ENCODE measurements at regions of chr12 and their contacts with region 1.

Region 1: GRCh38 chr12:2877047-2877952 is at the starts of genes FOXM1 and RHNO1:
- DNase-seq: peak; percentile 93
- H3K4me3 ChIP-seq: peak within 1 kb of the TSS; percentile 65
- H3K27ac ChIP-seq: peak within 1 kb of the TSS; percentile 86
- H3K4me1 ChIP-seq: no peaks in the 10 kb centered on the region
- H3K27me3 ChIP-seq: no peaks in the 10 kb centered on the region
- CTCF ChIP-seq: no peak
- total RNA-seq, gene FOXM1: 198 and 200 TPM in 2 replicates
- total RNA-seq, gene RHNO1: 71.7 and 79.9 TPM in 2 replicates

Region 2: GRCh38 chr12:2890388-2891239 is 13.3 kb after region 1 on chr12 and contains the start of gene TULP3:
- CTCF ChIA-PET with region 1: interaction called, 3 read pairs
- POLR2A ChIA-PET with region 1: interaction called, 8 read pairs
- intact Hi-C with region 1: loop called (anchors 1 kb)
- DNase-seq: peak; percentile 99
- H3K4me3 ChIP-seq: peak within 1 kb of the TSS; percentile 81
- H3K27ac ChIP-seq: peak within 1 kb of the TSS; percentile 89
- H3K4me1 ChIP-seq: peaks cover 14% of the 10 kb centered on the region
- H3K27me3 ChIP-seq: no peaks in the 10 kb centered on the region
- CTCF ChIP-seq: 0 out of 2 replicates have a peak, but pooled peaks have one; percentile 5
- total RNA-seq, gene TULP3: 48.1 and 55.6 TPM in 2 replicates

Region 3: DNA sequence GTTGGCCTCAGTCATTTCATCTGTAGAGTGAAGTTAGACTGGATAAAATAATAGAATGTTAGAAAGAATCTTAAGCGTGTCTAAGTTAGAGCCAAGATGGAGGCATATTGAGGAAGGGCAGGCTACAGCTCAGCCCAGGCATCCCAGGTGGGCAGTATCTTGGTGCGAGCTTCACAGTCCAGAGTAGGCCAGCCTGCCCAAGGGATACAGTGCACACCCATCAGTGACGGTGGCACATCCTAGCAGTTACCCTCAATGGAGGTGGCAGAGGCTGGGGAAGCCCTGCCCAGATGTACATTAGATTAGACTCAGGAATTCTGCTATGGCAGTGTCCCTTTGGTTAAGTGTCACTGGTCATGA is 34.9 kb after region 1 on chr12:
- CTCF ChIA-PET with region 1: no interaction called
- POLR2A ChIA-PET with region 1: no interaction called
- intact Hi-C with region 1: loop called (anchors 1 kb)
- DNase-seq: no peak
- H3K4me3 ChIP-seq: no peak overlapping the region
- H3K27ac ChIP-seq: peak overlapping the region; percentile 79
- H3K4me1 ChIP-seq: peaks cover 14% of the 10 kb centered on the region
- H3K27me3 ChIP-seq: no peaks in the 10 kb centered on the region
- CTCF ChIP-seq: no peak

Region 4: GRCh38 chr12:2944401-2945047 is 67.2 kb after region 1 on chr12:
- CTCF ChIA-PET with region 1: interaction called, 3 read pairs
- POLR2A ChIA-PET with region 1: no interaction called
- intact Hi-C with region 1: loop called (anchors 2 kb)
- DNase-seq: peak; percentile 63
- H3K4me3 ChIP-seq: peak overlapping the region; percentile 23
- H3K27ac ChIP-seq: no peak overlapping the region
- H3K4me1 ChIP-seq: no peaks in the 10 kb centered on the region
- H3K27me3 ChIP-seq: no peaks in the 10 kb centered on the region
- CTCF ChIP-seq: peak; percentile 96

Region 5: DNA sequence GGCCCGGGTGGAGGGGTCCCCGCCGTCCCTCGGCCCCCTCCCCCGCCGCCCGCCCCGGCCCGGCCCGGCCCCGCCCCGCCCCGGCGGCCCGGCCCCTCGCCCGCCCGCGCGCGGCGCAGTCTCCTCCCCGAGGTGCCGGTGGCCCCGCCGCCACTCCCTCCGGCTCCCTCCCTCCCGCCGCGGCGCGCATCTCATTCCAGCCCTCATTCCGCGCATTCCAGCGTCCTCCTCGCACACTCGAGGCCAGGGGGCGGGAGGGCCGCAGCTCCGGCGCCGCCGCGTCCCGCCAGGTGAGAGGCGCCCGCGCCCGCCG is 81.8 kb after region 1 on chr12 and contains the start of gene TEAD4:
- CTCF ChIA-PET with region 1: no interaction called
- POLR2A ChIA-PET with region 1: interaction called, 11 read pairs
- intact Hi-C with region 1: no loop called
- DNase-seq: peak; percentile 87
- H3K4me3 ChIP-seq: peak within 1 kb of the TSS; percentile 71
- H3K27ac ChIP-seq: peak within 1 kb of the TSS; percentile 69
- H3K4me1 ChIP-seq: peaks cover 24% of the 10 kb centered on the region
- H3K27me3 ChIP-seq: no peaks in the 10 kb centered on the region
- CTCF ChIP-seq: no peak
- total RNA-seq, gene TEAD4: 35.0 and 39.8 TPM in 2 replicates

Region 6: DNA sequence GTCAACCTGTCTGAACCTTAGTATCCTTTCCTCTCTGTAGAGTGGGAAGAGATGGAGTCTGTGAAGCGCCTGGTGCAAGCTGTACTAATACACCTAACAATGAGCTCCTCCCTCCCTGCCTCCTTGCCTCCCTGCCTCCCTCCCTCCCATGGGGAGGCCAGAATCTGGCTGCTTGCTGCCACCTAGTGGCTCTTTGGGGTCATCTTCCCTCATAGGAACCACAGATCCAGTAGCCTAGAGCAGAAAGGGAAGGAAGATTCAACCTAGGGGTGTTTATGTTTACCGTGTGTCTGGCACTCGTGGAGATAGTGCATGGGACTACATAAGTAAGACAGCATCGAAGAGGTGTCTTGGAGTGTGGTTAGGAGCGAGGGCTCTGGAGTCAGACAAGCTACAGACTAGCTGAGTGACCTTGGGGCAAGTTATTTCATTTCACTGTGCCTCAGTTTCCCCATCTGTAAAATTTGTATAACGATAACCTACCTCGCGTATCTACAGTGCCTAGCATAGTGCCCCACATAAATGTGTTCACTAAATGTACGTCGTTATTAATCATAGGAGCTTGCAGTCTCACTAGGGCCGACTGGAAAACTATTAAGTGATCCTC is 164.4 kb after region 1 on chr12:
- CTCF ChIA-PET with region 1: no interaction called
- POLR2A ChIA-PET with region 1: no interaction called
- intact Hi-C with region 1: no loop called
- DNase-seq: peak; percentile 92
- H3K4me3 ChIP-seq: no peak overlapping the region
- H3K27ac ChIP-seq: no peak overlapping the region
- H3K4me1 ChIP-seq: no peaks in the 10 kb centered on the region
- H3K27me3 ChIP-seq: no peaks in the 10 kb centered on the region
- CTCF ChIP-seq: peak; percentile 73

Measured in A673 (cell line).